Left lung (tissue), 14 donors: ENCODE measurements at regions of chr10 and their contacts with region 1.

Region 1: GRCh38 chr10:123967396-123968243 is 76.0 kb upstream of the CPXM2 start:
- DNase-seq: peak; percentile 30 to 89 (median 50)
- ATAC-seq: peak; percentile 92
- H3K4me3 ChIP-seq: no peak overlapping the region
- H3K27ac ChIP-seq: no peak overlapping the region
- H3K4me1 ChIP-seq: no peaks in the 10 kb centered on the region
- H3K27me3 ChIP-seq: peaks cover 12 to 97% of the 10 kb centered on the region in 2 donors
- CTCF ChIP-seq: peak; percentile 73 to 82

Region 2: GRCh38 chr10:123583639-123584418 is 383.8 kb before region 1 on chr10:
- intact Hi-C with region 1: loop called in 1 of 2 experiments (anchors 2 kb)
- DNase-seq: peak; percentile 58 to 89 (median 86)
- ATAC-seq: peak; percentile 99
- H3K4me3 ChIP-seq: no peak overlapping the region
- H3K27ac ChIP-seq: no peak overlapping the region
- H3K4me1 ChIP-seq: no peaks in the 10 kb centered on the region
- H3K27me3 ChIP-seq: peaks cover 14 to 77% of the 10 kb centered on the region in 2 donors
- CTCF ChIP-seq: peak; percentile 68 to 77